ENCODE measurements at regions of chr5 and their contacts with region 1.

Region 1: DNA sequence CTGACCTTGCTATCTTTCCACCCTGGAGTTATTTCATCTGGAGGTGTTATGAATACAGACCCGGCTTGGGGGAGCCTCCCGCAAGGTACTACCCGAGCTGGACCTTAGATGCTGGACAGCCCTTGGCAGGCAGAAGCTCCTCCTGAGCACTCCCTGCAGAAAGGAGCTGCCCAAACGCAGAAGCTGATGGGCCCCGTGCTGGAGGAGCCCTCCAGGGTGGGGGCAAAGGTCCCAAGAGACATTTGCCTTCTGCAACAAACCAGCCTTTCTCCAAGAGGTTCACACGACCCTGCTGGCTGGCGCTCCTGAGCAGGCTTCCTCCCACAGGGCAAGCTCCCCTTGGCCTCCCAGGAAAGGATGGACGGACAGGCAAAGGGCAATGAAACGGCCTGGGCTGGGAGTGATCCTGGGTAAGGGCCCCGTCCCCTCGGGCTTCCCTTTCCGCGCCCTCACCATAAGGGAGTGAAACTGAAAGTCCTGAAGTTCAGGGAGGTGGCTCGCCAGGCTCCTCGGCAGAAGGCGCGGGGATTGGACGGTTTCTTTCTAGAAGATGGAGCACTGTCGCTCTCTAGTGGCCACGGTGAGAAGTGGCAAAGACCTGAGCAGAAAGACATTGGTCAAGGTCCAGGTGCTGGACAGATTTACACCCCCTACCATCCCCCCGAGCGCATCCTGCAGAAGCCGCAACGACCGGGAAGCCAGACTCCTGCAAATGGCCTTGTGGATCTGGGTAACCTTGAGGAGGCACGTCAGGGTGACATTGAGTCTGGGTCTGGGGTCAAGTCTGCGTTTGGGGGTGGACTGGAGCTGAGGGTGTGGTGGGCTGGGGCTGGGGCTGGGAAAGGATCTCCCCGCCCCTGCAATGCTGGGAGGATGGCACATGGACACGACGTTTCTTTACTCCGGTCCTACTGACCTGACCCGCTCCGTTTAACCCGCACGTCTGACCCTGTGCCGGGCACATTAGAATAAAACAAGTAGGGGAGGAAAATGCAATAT is 56.4 kb downstream of the NEURL1B start:
- DNase-seq: peak; percentile 81 to 85 (median 82)
- H3K4me3 ChIP-seq: peak overlapping the region; percentile 75 to 77
- H3K4me3 Mint-ChIP-seq: peak overlapping the region; percentile 93 to 99 (median 96)
- H3K27ac ChIP-seq: peak overlapping the region; percentile 71
- H3K27ac Mint-ChIP-seq: peak overlapping the region; percentile 91 to 98 (median 96)
- H3K4me1 ChIP-seq: peaks cover 24% of the 10 kb centered on the region
- H3K4me1 Mint-ChIP-seq: peaks cover 11 to 27% (median 21%) of the 10 kb centered on the region in 4 donors
- H3K27me3 ChIP-seq: peaks cover 7% of the 10 kb centered on the region
- H3K27me3 Mint-ChIP-seq: peaks cover 14 to 15% of the 10 kb centered on the region in 2 donors

Region 2: GRCh38 chr5:171418316-171418981 is 1279.0 kb before region 1 on chr5:
- CTCF ChIA-PET with region 1: no interaction called
- POLR2A ChIA-PET with region 1: no interaction called
- intact Hi-C with region 1: loop called (anchors 5 kb)
- DNase-seq: peak in 4 of 5 donors; percentile 24 to 37 (median 33)
- H3K4me3 ChIP-seq: peak overlapping the region; percentile 11 to 58
- H3K4me3 Mint-ChIP-seq: peak overlapping the region; percentile 63 to 84 (median 78)
- H3K27ac ChIP-seq: no peak overlapping the region
- H3K27ac Mint-ChIP-seq: peak overlapping the region in 2 of 7 donors; percentile 46 to 54
- H3K4me1 ChIP-seq: peaks cover 20% of the 10 kb centered on the region
- H3K4me1 Mint-ChIP-seq: peaks cover 5 to 20% (median 13%) of the 10 kb centered on the region in 4 donors
- H3K27me3 ChIP-seq: peaks cover 10% of the 10 kb centered on the region
- H3K27me3 Mint-ChIP-seq: peaks cover 7 to 9% of the 10 kb centered on the region in 2 donors

Region 3: GRCh38 chr5:172293054-172293744 is 404.2 kb before region 1 on chr5:
- CTCF ChIA-PET with region 1: no interaction called
- POLR2A ChIA-PET with region 1: no interaction called
- intact Hi-C with region 1: loop called (anchors 10 kb)
- DNase-seq: peak; percentile 64 to 73 (median 65)
- H3K4me3 ChIP-seq: no peak overlapping the region
- H3K4me3 Mint-ChIP-seq: no peak overlapping the region
- H3K27ac ChIP-seq: no peak overlapping the region
- H3K27ac Mint-ChIP-seq: peak overlapping the region in 1 of 7 donors; percentile 49
- H3K4me1 ChIP-seq: no peaks in the 10 kb centered on the region
- H3K4me1 Mint-ChIP-seq: peaks cover 0 to 4% (median 2%) of the 10 kb centered on the region in 4 donors
- H3K27me3 ChIP-seq: no peaks in the 10 kb centered on the region
- H3K27me3 Mint-ChIP-seq: peaks cover 2 to 3% of the 10 kb centered on the region in 2 donors

Region 4: GRCh38 chr5:172458976-172459782 is 238.2 kb before region 1 on chr5:
- CTCF ChIA-PET with region 1: interaction called, 56 read pairs
- POLR2A ChIA-PET with region 1: no interaction called
- intact Hi-C with region 1: no loop called
- DNase-seq: no peak
- H3K4me3 ChIP-seq: no peak overlapping the region
- H3K4me3 Mint-ChIP-seq: no peak overlapping the region
- H3K27ac ChIP-seq: no peak overlapping the region
- H3K27ac Mint-ChIP-seq: peak overlapping the region in 1 of 7 donors; percentile 12
- H3K4me1 ChIP-seq: peaks cover 11% of the 10 kb centered on the region
- H3K4me1 Mint-ChIP-seq: peaks cover 9 to 22% (median 17%) of the 10 kb centered on the region in 4 donors
- H3K27me3 ChIP-seq: no peaks in the 10 kb centered on the region
- H3K27me3 Mint-ChIP-seq: peaks cover 9 to 19% of the 10 kb centered on the region in 2 donors

Region 5: DNA sequence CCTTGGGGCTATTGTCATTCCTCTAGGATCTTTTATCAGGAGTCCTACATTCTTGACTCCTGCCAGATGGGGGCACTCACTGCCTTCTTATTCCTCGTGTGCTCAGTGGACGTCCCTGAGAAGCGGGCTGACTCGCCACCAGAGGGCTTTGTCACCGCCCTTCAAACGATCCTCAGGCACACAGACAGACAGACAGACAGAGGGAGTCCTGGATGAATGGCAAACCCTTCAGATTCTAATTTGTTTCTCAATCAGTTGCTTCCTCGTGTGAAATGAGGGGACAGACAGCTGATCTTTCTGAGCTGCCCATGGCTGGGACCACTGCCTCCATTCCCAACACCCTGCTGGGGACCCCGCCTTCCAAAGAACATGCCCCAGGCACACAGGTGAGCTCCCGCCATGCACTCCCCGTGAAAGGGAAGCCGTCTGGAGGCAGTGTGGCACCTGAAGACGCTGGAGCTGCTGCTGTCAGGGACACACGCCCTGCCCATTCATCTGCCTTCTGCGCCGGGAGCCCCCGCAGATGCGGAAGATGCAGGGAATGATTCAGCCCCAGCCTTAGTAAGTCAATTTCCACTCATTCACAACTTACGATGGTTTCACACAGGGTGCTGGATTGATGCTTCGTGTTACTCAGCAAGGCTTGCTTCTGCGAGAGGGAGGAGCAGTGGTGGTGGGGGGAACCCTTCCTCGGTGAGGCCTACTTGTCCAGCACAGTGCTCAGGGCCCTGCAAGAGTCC is 218.2 kb before region 1 on chr5:
- CTCF ChIA-PET with region 1: interaction called, 52 read pairs
- POLR2A ChIA-PET with region 1: no interaction called
- intact Hi-C with region 1: no loop called
- DNase-seq: peak; percentile 41 to 57 (median 56)
- H3K4me3 ChIP-seq: no peak overlapping the region
- H3K4me3 Mint-ChIP-seq: no peak overlapping the region
- H3K27ac ChIP-seq: no peak overlapping the region
- H3K27ac Mint-ChIP-seq: no peak overlapping the region
- H3K4me1 ChIP-seq: no peaks in the 10 kb centered on the region
- H3K4me1 Mint-ChIP-seq: peaks cover 0 to 1% (median under 1%) of the 10 kb centered on the region in 4 donors
- H3K27me3 ChIP-seq: no peaks in the 10 kb centered on the region
- H3K27me3 Mint-ChIP-seq: no peaks in the 10 kb centered on the region

Region 6: GRCh38 chr5:172658961-172659491 is 38.4 kb before region 1 on chr5:
- CTCF ChIA-PET with region 1: no interaction called
- POLR2A ChIA-PET with region 1: no interaction called
- intact Hi-C with region 1: no loop called
- DNase-seq: no peak
- H3K4me3 ChIP-seq: no peak overlapping the region
- H3K4me3 Mint-ChIP-seq: no peak overlapping the region
- H3K27ac ChIP-seq: no peak overlapping the region
- H3K27ac Mint-ChIP-seq: no peak overlapping the region
- H3K4me1 ChIP-seq: no peaks in the 10 kb centered on the region
- H3K4me1 Mint-ChIP-seq: no peaks in the 10 kb centered on the region
- H3K27me3 ChIP-seq: no peaks in the 10 kb centered on the region
- H3K27me3 Mint-ChIP-seq: peaks cover 0 to 7% of the 10 kb centered on the region in 2 donors

Region 7: DNA sequence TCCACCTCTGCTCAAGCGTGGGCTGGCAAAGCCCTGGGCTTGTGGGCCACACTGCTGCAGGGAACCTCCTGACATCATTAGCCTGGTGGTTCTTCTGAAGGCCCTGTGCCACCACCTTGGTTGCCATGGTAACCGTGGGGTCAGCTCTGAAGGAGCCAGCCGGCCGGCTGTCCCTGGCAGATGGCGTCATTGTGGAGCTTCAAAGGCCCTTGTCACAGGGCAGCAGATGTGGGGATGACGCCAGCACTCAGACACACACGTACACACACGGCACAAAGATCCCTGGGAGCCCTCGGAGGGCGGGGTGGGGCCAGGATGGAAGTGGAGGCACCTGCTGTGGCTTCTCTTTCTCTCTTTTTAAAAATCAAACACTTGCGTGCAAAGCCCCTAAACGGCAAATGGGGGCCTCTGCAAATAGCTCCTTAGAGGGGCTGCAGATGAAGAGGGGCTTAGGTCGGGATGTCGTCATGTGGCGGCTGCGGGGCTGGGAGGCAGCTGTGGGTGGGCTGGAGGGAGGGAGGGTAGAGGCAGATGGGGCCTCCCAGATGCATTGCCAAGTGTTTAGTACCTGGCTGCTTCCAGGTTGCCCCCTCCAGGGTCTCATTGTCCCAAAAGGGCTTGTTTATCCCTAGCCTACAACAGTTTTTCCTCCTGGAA is 242.3 kb after region 1 on chr5:
- CTCF ChIA-PET with region 1: interaction called, 10 read pairs
- POLR2A ChIA-PET with region 1: no interaction called
- intact Hi-C with region 1: no loop called
- DNase-seq: no peak
- H3K4me3 ChIP-seq: no peak overlapping the region
- H3K4me3 Mint-ChIP-seq: no peak overlapping the region
- H3K27ac ChIP-seq: no peak overlapping the region
- H3K27ac Mint-ChIP-seq: no peak overlapping the region
- H3K4me1 ChIP-seq: no peaks in the 10 kb centered on the region
- H3K4me1 Mint-ChIP-seq: no peaks in the 10 kb centered on the region
- H3K27me3 ChIP-seq: no peaks in the 10 kb centered on the region
- H3K27me3 Mint-ChIP-seq: no peaks in the 10 kb centered on the region